Colonic mucosa (tissue), 4 donors: ENCODE measurements at regions of chr1 and their contacts with region 1.

Region 1: GRCh38 chr1:84301004-84301784 is at the start of gene SAMD13:
- DNase-seq: peak; percentile 95
- H3K4me3 ChIP-seq: peak within 1 kb of the TSS; percentile 16
- H3K27ac ChIP-seq: peak within 1 kb of the TSS; percentile 90
- H3K4me1 ChIP-seq: no peaks in the 10 kb centered on the region
- H3K27me3 ChIP-seq: no peaks in the 10 kb centered on the region
- CTCF ChIP-seq: no peak
- total RNA-seq, gene SAMD13: 22.2 to 31.0 TPM

Region 2: DNA sequence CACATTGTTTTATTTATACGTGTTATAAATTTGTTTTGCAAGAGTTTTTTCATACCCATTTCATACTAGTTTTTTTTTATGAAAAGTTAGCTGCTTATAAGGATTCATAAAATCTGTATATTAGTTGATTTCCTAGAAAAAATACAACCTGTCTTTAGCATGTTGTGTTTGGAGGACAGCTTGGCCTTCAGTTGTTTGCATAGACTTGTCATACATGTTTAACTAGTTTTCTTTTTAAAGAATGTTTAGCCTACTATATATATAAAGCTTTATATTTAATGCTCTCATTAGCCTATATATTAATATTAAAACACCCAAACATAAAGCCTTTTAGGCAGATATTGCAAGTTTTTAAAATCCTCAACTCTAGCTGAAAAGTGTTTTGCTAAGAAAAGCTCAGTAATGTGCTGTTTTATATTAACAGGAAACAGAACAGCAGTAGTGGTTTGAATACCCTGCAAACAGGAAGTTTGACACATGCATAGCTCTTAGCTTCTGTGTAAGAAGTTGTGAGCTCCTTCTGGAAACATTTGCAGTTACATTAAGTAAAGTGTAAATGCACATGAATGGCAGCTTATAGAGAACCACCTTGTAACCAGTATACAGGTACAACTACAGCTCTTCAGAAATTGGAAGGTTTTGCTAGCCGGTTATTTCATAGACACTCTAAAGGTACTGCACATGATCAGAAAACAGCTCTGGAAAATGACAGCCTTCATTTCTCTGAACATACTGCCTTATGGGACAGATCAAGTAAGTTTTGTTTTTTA is 157.2 kb before region 1 on chr1 and contains the start of gene PRKACB:
- intact Hi-C with region 1: loop called (anchors 10 kb)
- DNase-seq: no peak
- H3K4me3 ChIP-seq: peak within 1 kb of the TSS; percentile 25
- H3K27ac ChIP-seq: peak within 1 kb of the TSS; percentile 70
- H3K4me1 ChIP-seq: no peaks in the 10 kb centered on the region
- H3K27me3 ChIP-seq: no peaks in the 10 kb centered on the region
- CTCF ChIP-seq: no peak
- total RNA-seq, gene PRKACB: 85.2 to 149 TPM